T-cell (primary cell): ENCODE measurements at regions of chr12 and their contacts with region 1.

Region 1: GRCh38 chr12:121095544-121096198 is 37.0 kb upstream of the P2RX7 start:
- DNase-seq: peak; percentile 51 to 86 (median 71)
- ATAC-seq: peak; percentile 76 to 86 (median 84)
- H3K4me3 ChIP-seq: peak overlapping the region; percentile 44 to 62
- H3K4me3 Mint-ChIP-seq: peak overlapping the region; percentile 72 to 91 (median 83)
- H3K27ac ChIP-seq: no peak overlapping the region
- H3K27ac Mint-ChIP-seq: peak overlapping the region; percentile 22 to 58
- H3K4me1 ChIP-seq: peaks cover 25 to 36% of the 10 kb centered on the region in 2 experiments
- H3K4me1 Mint-ChIP-seq: peaks cover 45 to 50% (median 47%) of the 10 kb centered on the region in 3 donors
- H3K27me3 ChIP-seq: peaks cover 0 to 2% of the 10 kb centered on the region in 2 experiments
- H3K27me3 Mint-ChIP-seq: peaks cover 0 to 4% of the 10 kb centered on the region in 2 donors

Region 2: DNA sequence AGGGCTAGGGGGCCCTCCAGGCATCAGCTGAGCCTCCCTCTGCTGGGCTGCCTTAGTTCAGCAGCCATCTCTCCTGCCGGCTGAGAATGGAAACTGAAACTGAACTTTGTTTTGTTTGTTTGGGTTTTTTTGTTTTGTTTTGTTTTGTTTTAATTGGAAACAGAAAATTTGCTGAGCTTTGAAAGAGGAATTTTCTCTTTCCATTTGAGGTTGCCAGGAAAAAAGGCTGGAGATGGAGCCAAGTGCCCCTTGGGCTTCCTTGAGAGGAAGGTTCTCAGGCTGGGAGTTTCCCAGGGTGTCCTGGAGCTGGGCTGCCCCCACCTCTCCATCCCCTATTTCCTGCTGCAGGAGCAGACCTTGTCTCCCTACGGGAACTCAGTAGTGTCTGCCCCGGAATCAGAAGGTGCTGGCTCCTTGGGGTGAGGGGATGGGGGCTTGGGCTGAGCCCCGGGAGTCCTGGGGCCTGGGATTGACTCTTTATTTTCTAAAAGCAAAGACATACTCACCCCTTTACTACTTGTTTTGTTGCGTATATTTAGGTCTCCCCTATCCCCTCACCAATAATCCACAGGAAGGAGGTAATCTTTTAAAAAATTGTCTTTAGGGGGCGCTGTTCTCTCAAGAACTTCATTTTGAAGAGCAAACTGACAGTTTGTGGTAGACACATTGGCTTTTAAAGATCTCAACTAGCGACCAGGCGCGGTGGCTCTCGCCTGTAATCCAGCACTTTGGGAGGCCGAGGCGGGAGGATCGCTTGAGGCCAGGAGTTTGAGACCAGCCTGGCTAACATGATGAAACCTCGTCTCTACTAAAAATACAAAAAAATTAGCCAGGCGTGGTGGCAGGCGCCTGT is 35.3 kb before region 1 on chr12:
- CTCF ChIA-PET with region 1: interaction called in 1 of 2 experiments, 15 read pairs
- POLR2A ChIA-PET with region 1: interaction called, 4 to 7 read pairs
- DNase-seq: peak; percentile 21 to 83 (median 59)
- ATAC-seq: peak; percentile 90 to 96 (median 94)
- H3K4me3 ChIP-seq: peak overlapping the region; percentile 56 to 58
- H3K4me3 Mint-ChIP-seq: peak overlapping the region; percentile 81 to 87 (median 84)
- H3K27ac ChIP-seq: peak overlapping the region; percentile 89
- H3K27ac Mint-ChIP-seq: peak overlapping the region; percentile 96 to 98
- H3K4me1 ChIP-seq: peaks cover 2 to 16% of the 10 kb centered on the region in 2 experiments
- H3K4me1 Mint-ChIP-seq: peaks cover 15 to 16% (median 16%) of the 10 kb centered on the region in 3 donors
- H3K27me3 ChIP-seq: no peaks in the 10 kb centered on the region
- H3K27me3 Mint-ChIP-seq: no peaks in the 10 kb centered on the region

Region 3: DNA sequence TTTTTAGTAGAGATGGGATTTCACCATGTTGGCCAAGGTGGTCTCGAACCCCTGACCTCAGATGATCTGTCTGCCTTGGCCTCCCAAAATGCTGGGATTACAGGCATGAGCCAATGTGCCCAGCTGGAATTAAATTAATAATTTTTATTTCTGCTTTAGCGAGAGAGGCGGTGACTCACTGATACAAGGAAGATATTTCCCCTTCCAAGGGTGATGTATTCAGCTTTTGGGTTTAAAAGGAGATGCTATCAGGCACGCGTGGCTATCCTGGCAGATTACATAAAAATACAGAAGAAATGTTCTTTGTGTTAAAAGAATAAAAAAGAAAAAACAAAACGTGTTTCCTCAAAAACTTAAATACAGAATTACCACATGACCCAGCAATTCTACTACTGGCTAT is 24.7 kb after region 1 on chr12:
- CTCF ChIA-PET with region 1: no interaction called
- POLR2A ChIA-PET with region 1: no interaction called
- DNase-seq: no peak
- ATAC-seq: no peak
- H3K4me3 ChIP-seq: no peak overlapping the region
- H3K4me3 Mint-ChIP-seq: no peak overlapping the region
- H3K27ac ChIP-seq: no peak overlapping the region
- H3K27ac Mint-ChIP-seq: no peak overlapping the region
- H3K4me1 ChIP-seq: peaks cover 12 to 15% of the 10 kb centered on the region in 2 experiments
- H3K4me1 Mint-ChIP-seq: peaks cover 27 to 31% (median 27%) of the 10 kb centered on the region in 3 donors
- H3K27me3 ChIP-seq: no peaks in the 10 kb centered on the region
- H3K27me3 Mint-ChIP-seq: no peaks in the 10 kb centered on the region